ENCODE measurements at regions of chr1 and their contacts with region 1.

Region 1: DNA sequence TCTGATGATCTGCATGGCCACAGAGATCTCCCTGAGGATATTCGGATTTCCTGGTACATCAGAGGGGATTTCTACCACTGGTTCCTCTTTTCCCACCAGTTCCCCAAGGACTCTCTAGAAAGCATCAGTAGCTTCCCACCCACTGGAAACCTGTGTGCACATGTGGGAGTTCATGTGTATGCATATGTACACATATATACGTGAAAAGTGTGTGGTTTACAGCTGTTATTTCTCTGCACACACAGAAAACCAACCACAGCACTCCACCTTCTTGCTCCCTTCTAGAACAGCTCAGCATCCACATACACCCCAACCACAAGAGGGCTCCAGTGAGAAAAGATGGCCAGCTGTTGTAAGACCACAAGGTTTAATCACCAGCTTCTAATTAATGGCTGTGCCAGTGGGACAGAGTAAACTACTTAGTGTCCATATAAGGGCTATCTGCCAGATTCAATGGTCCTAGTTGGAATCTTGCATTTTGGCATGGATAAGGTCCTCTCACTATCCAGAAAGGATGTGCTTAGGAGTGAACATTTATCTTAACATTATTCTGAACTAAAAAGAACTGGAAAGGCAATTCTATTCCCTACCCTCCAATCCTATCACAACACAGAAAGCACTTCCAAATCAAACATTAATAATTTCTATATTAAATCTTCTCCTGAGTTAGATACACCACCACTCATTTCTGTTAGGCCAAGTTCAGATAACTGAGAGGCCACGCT is 24.1 kb downstream of the GPR3 start:
- DNase-seq: peak; percentile 63
- H3K4me3 Mint-ChIP-seq: no peak overlapping the region
- H3K27ac Mint-ChIP-seq: peak overlapping the region; percentile 25
- H3K4me1 Mint-ChIP-seq: peaks cover 43% of the 10 kb centered on the region
- H3K27me3 Mint-ChIP-seq: no peaks in the 10 kb centered on the region

Region 2: DNA sequence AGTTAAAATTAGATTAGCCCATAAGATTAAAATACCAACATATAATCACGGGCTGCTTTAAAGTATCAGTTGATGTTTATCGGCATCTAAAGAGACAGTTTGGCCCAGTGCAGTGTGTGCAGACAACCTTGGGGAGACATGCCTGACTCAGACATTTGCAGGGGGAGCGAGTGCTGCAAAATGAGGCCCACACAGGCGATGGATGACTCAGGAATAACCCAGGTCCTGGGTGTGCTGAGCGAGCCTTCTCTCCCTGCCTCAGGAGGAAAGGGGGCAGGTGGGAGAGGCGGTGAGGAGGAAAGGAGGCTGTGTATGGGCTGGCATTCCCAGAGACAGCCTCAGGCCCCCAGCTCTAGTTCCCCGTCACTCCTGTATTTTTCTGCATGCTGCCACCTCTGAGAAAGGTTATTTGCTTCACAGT is 270.6 kb before region 1 on chr1:
- CTCF ChIA-PET with region 1: no interaction called
- POLR2A ChIA-PET with region 1: no interaction called
- DNase-seq: no peak
- H3K4me3 Mint-ChIP-seq: no peak overlapping the region
- H3K27ac Mint-ChIP-seq: no peak overlapping the region
- H3K4me1 Mint-ChIP-seq: peaks cover 15% of the 10 kb centered on the region
- H3K27me3 Mint-ChIP-seq: no peaks in the 10 kb centered on the region

Region 3: DNA sequence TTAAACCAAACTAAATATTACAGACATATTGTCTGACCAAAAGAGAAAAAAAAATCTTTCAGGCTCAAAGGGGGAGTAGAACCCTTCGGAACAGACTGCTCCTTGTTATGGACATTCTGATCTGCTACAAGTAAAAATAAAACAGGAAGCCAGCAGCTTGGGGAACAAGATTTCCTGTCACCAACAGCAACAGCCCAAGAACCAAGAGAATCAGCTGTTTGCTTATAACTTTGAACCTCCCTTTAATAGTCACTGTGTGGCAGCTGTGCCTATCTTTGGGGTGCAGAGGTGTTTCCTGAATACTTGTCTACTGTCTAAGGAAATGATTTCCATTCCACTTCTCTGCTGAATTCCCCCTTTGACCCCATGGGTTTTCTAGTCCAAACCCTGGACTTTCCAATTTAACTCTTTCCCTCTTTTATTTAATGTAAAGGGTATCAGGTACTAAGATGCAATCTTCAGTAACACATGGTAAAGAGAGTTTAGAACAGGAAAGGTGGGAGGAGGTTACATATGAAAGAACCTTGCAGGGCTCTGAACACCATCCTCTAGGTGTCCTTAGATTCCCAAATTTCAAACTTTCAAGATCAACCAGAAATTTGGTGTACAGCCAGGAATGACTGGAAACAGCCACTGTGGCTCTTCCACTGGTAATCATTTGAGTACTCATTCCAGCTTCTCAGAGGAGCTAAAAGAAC is 14.5 kb after region 1 on chr1:
- CTCF ChIA-PET with region 1: interaction called, 56 read pairs
- POLR2A ChIA-PET with region 1: interaction called, 6 read pairs
- DNase-seq: peak; percentile 35
- H3K4me3 Mint-ChIP-seq: peak overlapping the region; percentile 43
- H3K27ac Mint-ChIP-seq: peak overlapping the region; percentile 70
- H3K4me1 Mint-ChIP-seq: peaks cover 69% of the 10 kb centered on the region
- H3K27me3 Mint-ChIP-seq: no peaks in the 10 kb centered on the region

Region 4: DNA sequence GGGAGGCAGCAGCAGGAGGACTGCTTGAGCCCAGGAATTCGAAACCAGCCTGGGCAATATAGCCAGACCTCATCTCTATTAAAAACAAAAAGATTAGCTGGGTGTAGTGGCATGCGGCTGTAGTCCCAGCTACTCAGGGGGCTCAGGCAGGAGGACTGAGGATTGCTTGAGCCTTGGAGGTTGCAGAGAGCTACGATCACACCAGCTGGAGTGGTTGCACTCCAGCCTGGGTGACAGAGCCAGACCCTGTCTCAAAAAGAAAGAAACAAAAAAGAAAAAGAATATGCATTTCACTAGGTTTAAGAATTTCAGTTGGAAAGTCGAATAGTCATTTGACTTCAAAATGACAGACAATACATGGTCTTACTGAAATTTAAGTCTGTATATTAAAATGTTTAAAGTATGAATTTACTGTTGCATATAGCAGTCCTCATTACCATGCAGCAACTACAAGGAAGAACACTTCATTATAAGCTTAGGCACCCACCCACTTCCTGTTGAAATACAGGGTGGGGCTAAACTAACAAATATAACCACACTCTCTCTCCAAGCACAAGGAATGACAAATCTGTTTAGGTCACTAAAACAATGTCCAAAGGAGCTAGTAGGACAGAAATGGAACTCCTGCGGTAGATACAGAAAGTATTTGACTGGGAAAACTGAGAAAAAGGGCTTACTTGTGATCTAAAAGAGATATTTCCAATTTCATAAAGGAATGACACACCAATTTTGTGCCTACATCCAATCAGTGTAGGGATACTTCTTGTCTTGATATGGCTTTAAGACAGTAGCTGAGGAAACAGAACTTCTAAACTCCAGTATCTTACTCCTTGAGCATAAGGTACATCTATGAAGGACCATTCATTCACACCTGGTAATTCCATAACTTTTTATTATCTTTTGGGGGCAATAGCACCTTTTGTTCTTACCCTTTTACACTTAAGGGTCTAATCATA is 19.9 kb after region 1 on chr1:
- CTCF ChIA-PET with region 1: interaction called, 56 read pairs
- POLR2A ChIA-PET with region 1: interaction called, 6 read pairs
- DNase-seq: no peak
- H3K4me3 Mint-ChIP-seq: peak overlapping the region; percentile 47
- H3K27ac Mint-ChIP-seq: peak overlapping the region; percentile 69
- H3K4me1 Mint-ChIP-seq: peaks cover 59% of the 10 kb centered on the region
- H3K27me3 Mint-ChIP-seq: no peaks in the 10 kb centered on the region